ENCODE measurements at regions of chr10 and their contacts with region 1.

Region 1: GRCh38 chr10:84845624-84846261 is 517.4 kb downstream of the CCSER2 start:
- DNase-seq: no peak
- ATAC-seq: peak in 4 of 8 donors; percentile 56 to 69 (median 62)
- H3K4me3 ChIP-seq: no peak overlapping the region
- H3K27ac ChIP-seq: no peak overlapping the region
- H3K4me1 ChIP-seq: peaks cover 0 to 5% (median 0%) of the 10 kb centered on the region in 9 donors
- H3K27me3 ChIP-seq: no peaks in the 10 kb centered on the region
- CTCF ChIP-seq: peak; percentile 5 to 63 (median 41)

Region 2: DNA sequence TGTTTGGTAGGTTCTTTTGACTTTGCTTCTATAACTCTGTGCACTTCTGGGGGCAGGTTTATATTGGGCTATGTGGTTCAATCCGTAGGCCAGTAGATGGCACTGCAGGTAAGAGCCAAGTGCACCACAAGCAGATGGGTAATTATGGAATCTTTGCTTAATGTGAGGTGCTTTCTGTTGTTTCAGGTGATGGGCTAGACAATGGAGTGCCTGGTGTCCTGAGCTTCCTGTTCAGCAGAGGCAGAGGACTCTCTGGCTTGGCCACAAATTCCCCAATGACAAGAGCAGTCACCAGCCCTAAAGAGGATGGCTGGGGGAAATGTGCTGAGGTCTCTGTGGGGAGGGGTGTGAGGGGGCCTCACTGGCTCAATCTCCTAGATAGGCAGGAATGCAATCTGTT is 62.4 kb before region 1 on chr10:
- intact Hi-C with region 1: loop called in 5 of 10 experiments (anchors 5 to 10 kb)
- DNase-seq: peak in 1 of 2 donors; percentile 15
- ATAC-seq: peak in 5 of 8 donors; percentile 70 to 79 (median 74)
- H3K4me3 ChIP-seq: no peak overlapping the region
- H3K27ac ChIP-seq: no peak overlapping the region
- H3K4me1 ChIP-seq: no peaks in the 10 kb centered on the region
- H3K27me3 ChIP-seq: no peaks in the 10 kb centered on the region
- CTCF ChIP-seq: peak; percentile 32 to 64 (median 57)

Region 3: DNA sequence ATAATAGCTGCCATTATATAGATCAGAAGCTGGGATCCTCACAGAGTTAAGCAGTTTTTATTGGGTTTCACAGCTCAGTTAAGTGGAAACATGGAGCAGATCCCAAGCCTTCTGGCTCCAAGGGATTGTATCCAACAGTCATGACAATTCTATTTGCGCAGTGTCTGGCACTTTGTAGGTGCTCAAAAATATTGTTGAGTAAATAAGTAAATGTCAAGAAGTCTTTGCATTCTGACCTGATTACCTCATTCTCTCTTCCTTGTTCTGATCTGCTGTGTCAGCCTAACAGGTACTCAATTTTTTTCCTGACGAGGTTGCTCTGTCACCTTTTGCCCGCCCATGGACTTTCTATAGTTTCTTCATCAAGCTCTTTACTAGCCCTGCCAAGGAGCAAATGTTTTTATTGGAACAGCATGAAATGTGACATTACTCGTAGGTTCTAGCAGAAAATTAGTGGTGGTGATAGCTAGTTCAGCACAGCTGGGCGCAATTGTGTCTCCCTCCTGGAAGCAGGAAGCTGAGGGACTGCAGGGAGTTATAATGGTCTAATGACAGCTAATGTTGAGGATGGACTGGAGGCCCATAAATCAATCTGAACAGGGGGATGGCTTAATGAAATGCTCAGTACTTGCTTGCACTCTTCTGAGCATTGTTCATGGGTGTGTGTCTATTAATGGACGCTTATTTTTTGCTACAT is 162.9 kb after region 1 on chr10:
- intact Hi-C with region 1: no loop called
- DNase-seq: no peak
- ATAC-seq: no peak
- H3K4me3 ChIP-seq: no peak overlapping the region
- H3K27ac ChIP-seq: no peak overlapping the region
- H3K4me1 ChIP-seq: no peaks in the 10 kb centered on the region
- H3K27me3 ChIP-seq: no peaks in the 10 kb centered on the region
- CTCF ChIP-seq: no peak